Lower leg skin (tissue), 4 donors: ENCODE measurements at regions of chr14 and their contacts with region 1.

Region 1: DNA sequence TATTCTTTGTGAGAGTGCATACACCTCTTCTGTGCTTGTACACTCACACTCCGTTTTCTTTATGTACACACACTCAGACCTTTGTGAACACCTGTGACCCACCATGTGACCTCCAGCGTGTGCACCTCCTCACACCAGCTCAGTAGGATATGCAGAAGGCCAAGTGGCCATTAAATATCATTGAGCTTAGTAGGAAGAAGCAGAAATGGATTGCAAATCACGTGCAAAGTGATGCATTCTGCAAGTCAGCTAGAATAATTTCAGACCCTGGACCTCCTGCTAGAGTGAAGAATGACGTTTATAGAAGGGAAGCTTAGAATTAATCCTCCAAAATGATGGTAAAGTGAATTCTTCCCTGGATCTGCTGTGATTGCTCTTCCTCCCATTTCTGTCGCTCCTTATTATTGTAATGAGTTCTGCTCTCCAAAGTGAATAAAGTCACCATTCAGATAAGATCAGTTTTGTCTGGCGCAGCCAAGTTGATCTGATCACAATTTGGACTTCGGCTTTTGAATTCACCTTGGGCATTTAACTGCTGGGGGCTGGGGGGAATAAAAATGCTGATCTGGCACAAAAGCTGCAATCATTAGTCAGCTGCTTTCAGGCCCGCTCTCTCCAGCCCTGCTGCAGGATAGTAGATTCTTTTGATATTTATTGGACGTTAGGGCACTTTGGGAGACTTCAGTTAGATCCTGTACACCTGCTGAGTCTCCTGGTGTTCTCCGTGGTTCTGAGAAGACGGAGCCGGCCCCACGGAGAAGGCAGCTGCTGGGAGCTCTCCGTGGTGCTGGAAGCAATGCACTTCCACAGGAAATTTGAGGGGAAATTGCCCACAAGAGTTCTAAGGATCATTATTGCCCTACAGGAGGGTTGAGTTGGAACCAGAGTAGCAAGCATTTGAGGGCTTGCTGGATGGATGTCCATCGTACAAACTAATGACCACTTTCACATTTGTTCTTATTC is 12.4 kb upstream of the NRXN3 start:
- DNase-seq: no peak
- H3K4me3 ChIP-seq: no peak overlapping the region
- CTCF ChIP-seq: no peak
- POLR2A ChIP-seq: no peak

Region 2: GRCh38 chr14:77660754-77661153 is 497.0 kb before region 1 on chr14:
- intact Hi-C with region 1: loop called (anchors 5 kb)
- DNase-seq: no peak
- H3K4me3 ChIP-seq: no peak overlapping the region
- CTCF ChIP-seq: no peak
- POLR2A ChIP-seq: no peak

Region 3: DNA sequence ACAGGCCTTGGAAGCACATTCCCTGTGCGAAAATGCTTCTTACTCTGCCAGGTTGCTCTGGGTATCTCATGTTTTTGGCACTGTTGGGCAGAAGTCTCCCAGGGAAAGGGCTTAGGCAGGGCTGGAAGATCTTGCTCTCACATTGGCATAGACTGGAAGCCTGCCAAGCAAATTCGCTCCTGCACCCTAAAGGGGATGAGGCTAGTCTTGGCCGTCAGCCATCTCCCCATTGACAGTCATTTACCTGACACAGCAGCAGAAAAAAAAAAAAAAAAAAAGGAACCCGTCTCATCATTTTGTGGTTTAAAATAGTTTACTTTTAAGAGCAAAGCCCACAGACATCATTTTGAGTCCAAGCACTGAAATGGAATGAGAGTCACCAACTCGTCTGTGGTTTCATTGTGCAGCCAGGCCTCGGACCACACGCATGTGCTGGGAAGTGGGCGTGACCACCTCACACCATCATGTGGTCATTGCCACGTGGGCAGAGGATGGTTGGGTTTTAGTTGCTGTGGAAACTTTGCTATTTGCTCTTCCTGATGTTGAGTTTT is 97.2 kb after region 1 on chr14:
- intact Hi-C with region 1: no loop called
- DNase-seq: no peak
- H3K4me3 ChIP-seq: no peak overlapping the region
- CTCF ChIP-seq: no peak
- POLR2A ChIP-seq: no peak

Region 4: DNA sequence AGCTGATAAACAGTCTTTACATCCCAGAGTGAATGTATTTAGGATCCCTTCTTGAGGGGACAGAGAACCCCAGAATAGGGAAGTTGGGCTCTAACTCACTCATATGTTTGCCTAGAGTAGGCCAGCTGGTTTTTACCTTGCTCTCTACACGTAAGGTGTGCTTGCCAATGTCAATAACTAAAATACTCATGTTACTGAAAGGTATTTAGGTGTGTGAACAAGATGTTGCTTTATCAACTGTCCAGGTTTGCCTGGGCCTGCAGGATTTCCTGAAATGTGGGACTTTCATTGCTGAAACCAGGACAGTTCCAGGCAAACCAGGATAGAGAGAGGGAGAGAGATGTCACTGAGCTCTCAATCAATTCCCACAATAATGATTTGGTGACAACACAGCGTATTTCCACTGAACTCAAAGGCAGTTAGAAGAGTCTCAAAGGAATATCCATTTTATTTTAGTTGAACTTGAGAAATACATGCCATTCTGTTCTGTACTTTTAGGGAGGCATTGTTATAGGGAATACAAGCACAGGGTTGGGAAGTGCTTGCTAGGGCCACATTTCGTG is 184.1 kb after region 1 on chr14:
- intact Hi-C with region 1: no loop called
- DNase-seq: no peak
- H3K4me3 ChIP-seq: no peak overlapping the region
- CTCF ChIP-seq: no peak
- POLR2A ChIP-seq: no peak

Region 5: DNA sequence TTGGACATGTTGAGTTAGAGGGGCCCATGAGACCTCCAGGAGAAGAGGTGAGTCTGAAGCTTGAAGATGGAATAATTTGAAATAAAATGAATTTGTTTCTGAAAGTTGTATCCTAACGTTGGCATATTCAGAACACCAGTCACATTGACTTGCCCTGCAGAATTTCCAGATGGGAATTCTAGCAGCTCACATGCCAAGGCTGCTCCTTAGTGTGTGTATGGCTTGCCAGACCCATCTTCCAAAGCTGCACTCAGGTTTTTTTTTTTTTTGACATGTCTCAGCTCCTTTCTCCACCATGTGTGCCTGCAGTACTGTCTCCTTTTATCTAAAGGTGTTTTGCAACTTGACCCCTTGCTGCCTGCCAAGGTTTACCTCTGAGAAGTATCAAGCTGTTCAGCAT is 274.3 kb after region 1 on chr14:
- intact Hi-C with region 1: no loop called
- DNase-seq: no peak
- H3K4me3 ChIP-seq: no peak overlapping the region
- CTCF ChIP-seq: no peak
- POLR2A ChIP-seq: no peak